Esophagus muscularis mucosa (tissue), 4 donors: ENCODE measurements at regions of chr10 and their contacts with region 1.

Region 1: GRCh38 chr10:91493313-91493712 is 83.2 kb downstream of the HECTD2 start:
- DNase-seq: no peak
- H3K4me3 ChIP-seq: no peak overlapping the region
- H3K27ac ChIP-seq: no peak overlapping the region
- H3K4me1 ChIP-seq: peaks cover 0 to 6% (median 2%) of the 10 kb centered on the region in 4 donors
- H3K27me3 ChIP-seq: no peaks in the 10 kb centered on the region
- CTCF ChIP-seq: peak; percentile 60 to 65 (median 62)
- EP300 ChIP-seq: no peak
- POLR2A ChIP-seq: no peak

Region 2: DNA sequence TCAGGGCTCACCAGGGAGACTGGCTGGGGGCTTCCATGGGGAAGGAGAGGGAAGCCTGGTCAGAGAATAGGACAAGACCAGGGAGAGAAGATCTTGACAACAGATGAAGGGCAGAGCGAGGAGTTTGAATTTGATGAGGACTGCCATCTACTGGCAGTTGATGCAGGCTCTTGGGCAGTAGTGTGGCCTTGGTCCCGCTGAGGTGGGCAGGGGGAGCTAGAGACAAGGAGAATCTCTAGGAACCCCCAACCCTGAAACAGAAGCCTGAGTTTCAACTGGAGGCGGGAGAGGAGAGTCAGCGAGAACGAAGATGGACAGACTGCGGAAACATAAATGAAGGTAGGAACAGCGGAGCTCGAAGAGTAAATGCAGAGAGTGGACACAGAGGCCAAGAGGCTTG is 58.5 kb after region 1 on chr10:
- intact Hi-C with region 1: loop called (anchors 10 kb)
- DNase-seq: no peak
- H3K4me3 ChIP-seq: peak overlapping the region in 1 of 4 donors; percentile 1
- H3K27ac ChIP-seq: no peak overlapping the region
- H3K4me1 ChIP-seq: peaks cover 6 to 13% (median 12%) of the 10 kb centered on the region in 4 donors
- H3K27me3 ChIP-seq: no peaks in the 10 kb centered on the region
- CTCF ChIP-seq: peak; percentile 47 to 48 (median 47)
- EP300 ChIP-seq: no peak
- POLR2A ChIP-seq: no peak